ENCODE measurements at regions of chr1 and their contacts with region 1.

Region 1: GRCh38 chr1:13730751-13731482 is 30.9 kb downstream of the PRDM2 start:
- DNase-seq: peak; percentile 83
- H3K4me3 Mint-ChIP-seq: peak overlapping the region; percentile 84
- H3K27ac Mint-ChIP-seq: peak overlapping the region; percentile 98
- H3K4me1 Mint-ChIP-seq: peaks cover 61% of the 10 kb centered on the region
- H3K27me3 Mint-ChIP-seq: no peaks in the 10 kb centered on the region

Region 2: GRCh38 chr1:13699936-13700520 is 30.9 kb before region 1 on chr1 and contains the start of gene PRDM2:
- intact Hi-C with region 1: loop called (anchors 1 kb)
- DNase-seq: peak; percentile 57
- H3K4me3 Mint-ChIP-seq: peak within 1 kb of the TSS; percentile 100
- H3K27ac Mint-ChIP-seq: peak within 1 kb of the TSS; percentile 99
- H3K4me1 Mint-ChIP-seq: peaks cover 45% of the 10 kb centered on the region
- H3K27me3 Mint-ChIP-seq: peaks cover 6% of the 10 kb centered on the region
- total RNA-seq, gene PRDM2: 48.5 and 50.4 TPM in 2 replicates

Measured in activated T-helper 1 cell treated with anti-CD3 and anti-CD28 coated beads, Interleukin-12 subunit alpha, Interleukin-12 subunit beta, Interleukin-2, Interleukin-4 antibody, amounts not matched to agents 30 ng/mL and 10 ng/mL and 1 ng/mL, durations not matched to agents 14 hours and 24 hours and 36 hours (primary cell).